Activated naive CD4-positive, alpha-beta T cell treated with anti-CD3 and anti-CD28 coated beads for 36 hours (primary cell): ENCODE measurements at regions of chr1 and their contacts with region 1.

Region 1: DNA sequence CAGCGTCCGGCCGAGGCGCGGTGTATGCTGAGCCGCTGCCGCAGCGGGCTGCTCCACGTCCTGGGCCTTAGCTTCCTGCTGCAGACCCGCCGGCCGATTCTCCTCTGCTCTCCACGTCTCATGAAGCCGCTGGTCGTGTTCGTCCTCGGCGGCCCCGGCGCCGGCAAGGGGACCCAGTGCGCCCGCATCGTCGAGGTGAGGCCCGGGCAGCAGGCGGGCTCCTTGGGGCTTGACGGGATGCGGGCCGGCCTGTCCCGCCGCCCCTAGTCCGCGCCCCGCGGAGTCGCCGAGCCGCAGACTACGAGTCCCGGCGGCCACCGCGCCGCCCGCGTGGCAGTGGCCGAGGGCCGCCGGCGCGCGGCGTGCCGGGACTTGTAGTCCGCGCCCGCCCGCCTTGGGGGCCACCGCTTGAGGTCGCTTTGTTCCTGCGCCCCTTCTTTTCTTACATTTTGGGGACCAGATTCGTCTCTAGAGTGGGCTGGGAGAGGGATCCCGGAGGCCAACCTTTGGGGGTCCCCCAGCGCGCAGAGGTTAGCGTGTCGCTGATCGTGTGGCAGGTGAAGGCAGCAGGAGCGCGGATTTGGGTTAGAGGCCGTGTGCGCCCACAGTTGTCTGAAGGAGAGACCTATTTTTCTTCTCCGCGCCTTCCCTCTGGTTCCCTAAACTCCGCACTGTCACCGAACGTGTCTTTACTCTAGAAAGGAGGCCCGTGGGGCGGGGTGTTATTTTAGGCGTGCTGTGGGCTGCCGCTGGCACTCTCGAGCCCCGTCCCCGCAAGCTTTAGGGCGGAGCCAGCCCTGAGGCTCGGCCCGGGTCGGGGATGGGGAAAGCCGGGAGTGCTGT is 553 bp downstream of the CMPK1 start:
- DNase-seq: peak; percentile 75
- H3K4me3 Mint-ChIP-seq: peak overlapping the region; percentile 88
- H3K27ac Mint-ChIP-seq: peak overlapping the region; percentile 93
- H3K4me1 Mint-ChIP-seq: peaks cover 20% of the 10 kb centered on the region
- H3K27me3 Mint-ChIP-seq: no peaks in the 10 kb centered on the region

Region 2: DNA sequence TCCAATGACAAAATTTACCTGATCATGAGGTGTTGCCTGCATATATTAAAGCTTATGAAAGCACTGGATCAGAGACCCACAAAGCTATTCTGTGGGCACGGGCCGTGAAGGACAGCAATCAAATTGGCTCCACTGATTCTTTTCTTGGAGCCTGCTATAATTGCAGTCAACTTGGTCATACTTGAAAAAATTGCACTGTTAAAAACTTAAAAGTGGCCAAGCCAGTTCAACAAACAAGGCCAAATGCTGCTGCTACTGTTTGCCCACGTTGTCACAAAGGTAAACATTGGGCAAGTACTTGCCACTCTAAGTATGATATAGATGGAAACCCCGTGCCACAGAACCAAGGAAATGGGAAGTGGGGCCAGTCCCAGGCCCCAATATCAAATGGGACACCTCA is 430.7 kb before region 1 on chr1:
- CTCF ChIA-PET with region 1: no interaction called
- intact Hi-C with region 1: no loop called
- DNase-seq: no peak
- H3K4me3 Mint-ChIP-seq: no peak overlapping the region
- H3K27ac Mint-ChIP-seq: no peak overlapping the region
- H3K4me1 Mint-ChIP-seq: no peaks in the 10 kb centered on the region
- H3K27me3 Mint-ChIP-seq: peaks cover 23% of the 10 kb centered on the region

Region 3: GRCh38 chr1:47313915-47314664 is 20.1 kb before region 1 on chr1 and contains the start of gene STIL:
- CTCF ChIA-PET with region 1: interaction called, 12 read pairs
- intact Hi-C with region 1: loop called (anchors 1 kb)
- DNase-seq: peak; percentile 99
- H3K4me3 Mint-ChIP-seq: peak within 1 kb of the TSS; percentile 96
- H3K27ac Mint-ChIP-seq: peak within 1 kb of the TSS; percentile 95
- H3K4me1 Mint-ChIP-seq: peaks cover 10% of the 10 kb centered on the region
- H3K27me3 Mint-ChIP-seq: no peaks in the 10 kb centered on the region
- total RNA-seq, gene STIL: 41.4 to 43.5 TPM